ENCODE measurements at regions of chr19 and their contacts with region 1.

Region 1: DNA sequence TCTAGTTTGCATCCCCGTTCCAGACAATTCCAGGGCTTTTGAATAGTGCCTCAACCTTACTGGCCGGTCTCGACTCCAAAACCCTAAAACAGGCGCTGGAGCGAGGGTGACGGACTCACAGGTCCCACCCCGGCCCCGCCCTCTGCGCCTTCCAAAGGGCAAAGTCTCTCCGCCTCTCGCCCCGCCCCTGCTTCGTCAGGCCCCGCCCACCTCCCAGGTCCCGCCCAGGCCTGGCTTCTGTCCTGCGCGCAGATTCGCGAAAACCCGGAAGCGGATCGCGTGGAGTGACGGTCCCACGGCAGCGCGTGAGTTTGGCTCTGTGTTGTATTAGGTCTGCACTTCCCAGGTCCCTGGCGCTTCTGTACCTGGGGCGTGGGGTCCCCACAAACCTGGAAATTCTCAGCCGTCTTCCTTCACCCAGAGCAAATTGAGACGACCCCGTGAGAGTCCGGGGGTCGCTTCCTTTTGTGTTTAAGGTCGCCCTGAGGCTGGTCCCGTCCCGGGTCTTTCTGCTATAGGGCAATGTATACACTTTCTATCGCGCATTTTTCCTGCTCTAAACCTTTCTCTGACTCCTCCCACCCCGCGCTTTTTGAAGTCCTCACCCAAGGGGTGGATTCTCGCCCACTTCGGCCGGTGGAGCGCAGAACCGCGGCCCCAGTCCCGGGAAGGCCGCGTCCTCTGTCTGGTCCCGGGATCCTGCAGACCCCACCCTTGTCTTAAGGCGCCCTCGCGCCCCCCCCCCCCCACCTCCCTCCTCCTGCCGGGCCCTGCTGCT is at the start of gene ZNF813:
- DNase-seq: peak; percentile 80 to 99 (median 94)

Region 2: DNA sequence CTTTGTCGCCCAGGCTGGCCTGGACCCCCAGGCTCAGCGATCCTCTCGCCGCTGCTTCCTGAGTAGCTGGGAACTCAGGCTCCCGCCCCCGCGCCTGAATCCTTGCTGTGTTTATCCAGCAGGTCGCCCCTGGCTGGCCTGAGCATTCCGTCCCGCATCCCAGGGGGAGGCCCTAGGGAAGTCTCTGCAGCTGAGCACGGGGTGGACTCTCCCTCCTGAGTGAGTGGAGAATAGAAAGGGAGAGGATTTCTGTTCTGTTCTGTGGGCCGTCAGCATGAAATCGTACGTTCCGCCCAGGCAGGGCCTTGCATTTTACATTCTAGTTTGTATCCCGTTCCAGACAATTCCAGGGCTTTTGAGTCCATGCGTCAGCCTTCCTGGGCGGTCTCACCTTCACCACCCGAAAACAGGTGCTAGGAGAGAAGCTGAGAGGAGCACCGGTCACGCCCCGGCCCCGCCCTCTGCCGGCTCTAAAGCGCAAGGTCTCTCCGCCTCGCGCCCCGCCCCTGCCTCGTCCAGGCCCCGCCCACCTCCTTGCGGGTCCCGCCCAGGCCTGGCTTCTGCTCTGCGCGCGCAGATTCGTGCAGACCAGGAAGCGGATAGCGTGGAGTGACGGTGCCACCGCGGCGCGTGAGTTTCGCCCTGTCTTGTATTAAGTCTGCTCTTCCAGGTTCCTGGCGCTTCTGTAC is 36.1 kb before region 1 on chr19 and contains the start of gene ZNF761:
- intact Hi-C with region 1: loop called (anchors 2 kb)
- DNase-seq: peak; percentile 88 to 99 (median 94)

Region 3: GRCh38 chr19:53520550-53521372 is 53.1 kb after region 1 on chr19:
- intact Hi-C with region 1: loop called (anchors 1 kb)
- DNase-seq: peak; percentile 92 to 99 (median 95)